HEK293 (cell line): ENCODE measurements at regions of chr17 and their contacts with region 1.

Region 1: GRCh38 chr17:40113110-40113906 is 8.5 kb upstream of the MSL1 start:
- H3K4me3 ChIP-seq: peak overlapping the region; percentile 38
- H3K27ac ChIP-seq: peak overlapping the region; percentile 79
- H3K4me1 ChIP-seq: peaks cover 31% of the 10 kb centered on the region
- CTCF ChIP-seq: peak; percentile 80; the same call in 1 of the 2 replicates

Region 2: GRCh38 chr17:39621523-39622379 is 491.6 kb before region 1 on chr17:
- CTCF ChIA-PET with region 1: no interaction called
- POLR2A ChIA-PET with region 1: no interaction called
- H3K4me3 ChIP-seq: no peak overlapping the region
- H3K27ac ChIP-seq: no peak overlapping the region
- H3K4me1 ChIP-seq: peaks cover 4% of the 10 kb centered on the region
- CTCF ChIP-seq: peak; percentile 99

Region 3: DNA sequence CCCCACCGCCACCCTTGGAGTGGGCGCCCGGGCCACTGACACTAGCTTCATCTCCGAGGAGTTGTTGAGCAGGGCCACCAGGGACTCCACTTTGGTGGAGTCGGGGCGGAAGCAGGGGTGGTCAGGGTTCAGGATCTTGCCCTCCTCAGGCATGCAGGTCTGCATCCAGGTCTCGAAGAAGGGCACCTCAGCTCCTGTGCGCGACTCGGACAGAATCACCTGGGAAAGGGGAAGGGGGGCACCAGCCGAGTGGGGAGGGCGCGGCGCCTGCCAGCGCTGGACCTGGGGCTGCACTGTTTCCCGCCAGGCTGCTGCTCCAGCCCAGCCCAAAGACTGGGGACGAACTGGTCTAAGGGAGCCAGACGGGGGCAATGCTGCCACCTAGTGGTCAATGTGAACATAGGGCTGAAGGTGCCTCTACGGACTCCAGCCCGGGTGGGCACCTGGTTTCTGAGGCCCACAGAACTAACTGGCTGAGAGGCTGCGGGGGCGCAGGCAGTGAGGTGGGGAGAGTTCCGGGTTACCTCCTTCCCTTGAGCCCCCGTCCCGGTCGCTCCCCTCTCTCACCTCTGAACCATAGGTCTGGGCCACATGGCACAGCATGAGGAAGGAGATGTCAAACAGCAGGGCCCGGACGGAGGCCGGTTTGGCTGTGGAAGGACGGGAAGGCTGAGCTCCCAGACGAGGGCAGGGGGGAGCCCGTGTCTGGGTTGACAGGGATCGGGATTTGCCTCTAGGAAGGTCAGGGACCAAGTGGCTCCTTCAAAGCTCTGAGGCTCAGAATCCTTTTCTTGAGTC is 86.3 kb before region 1 on chr17:
- CTCF ChIA-PET with region 1: interaction called, 135 read pairs
- POLR2A ChIA-PET with region 1: interaction called, 3 read pairs
- H3K4me3 ChIP-seq: no peak overlapping the region
- H3K27ac ChIP-seq: no peak overlapping the region
- H3K4me1 ChIP-seq: peaks cover 16% of the 10 kb centered on the region
- CTCF ChIP-seq: peak; percentile 82

Region 4: GRCh38 chr17:40075201-40075941 is 37.9 kb before region 1 on chr17:
- CTCF ChIA-PET with region 1: interaction called, 51 read pairs
- POLR2A ChIA-PET with region 1: interaction called, 5 read pairs
- H3K4me3 ChIP-seq: no peak overlapping the region
- H3K27ac ChIP-seq: no peak overlapping the region
- H3K4me1 ChIP-seq: peaks cover 22% of the 10 kb centered on the region
- CTCF ChIP-seq: peak; percentile 80

Region 5: GRCh38 chr17:40098846-40099618 is 14.3 kb before region 1 on chr17:
- CTCF ChIA-PET with region 1: interaction called, 55 read pairs
- POLR2A ChIA-PET with region 1: interaction called, 117 read pairs
- H3K4me3 ChIP-seq: peak overlapping the region; percentile 23
- H3K27ac ChIP-seq: peak overlapping the region; percentile 26; the same call in 1 of the 2 replicates
- H3K4me1 ChIP-seq: peaks cover 16% of the 10 kb centered on the region
- CTCF ChIP-seq: no peak

Region 6: GRCh38 chr17:40157973-40158372 is 44.7 kb after region 1 on chr17:
- CTCF ChIA-PET with region 1: interaction called, 15 read pairs
- POLR2A ChIA-PET with region 1: interaction called, 6 read pairs
- H3K4me3 ChIP-seq: no peak overlapping the region
- H3K27ac ChIP-seq: no peak overlapping the region
- H3K4me1 ChIP-seq: no peaks in the 10 kb centered on the region
- CTCF ChIP-seq: no peak

Region 7: GRCh38 chr17:40191237-40192208 is 78.2 kb after region 1 on chr17:
- CTCF ChIA-PET with region 1: interaction called, 52 read pairs
- POLR2A ChIA-PET with region 1: interaction called, 13 read pairs
- H3K4me3 ChIP-seq: peak overlapping the region; percentile 50
- H3K27ac ChIP-seq: no peak overlapping the region
- H3K4me1 ChIP-seq: peaks cover 6% of the 10 kb centered on the region
- CTCF ChIP-seq: peak; percentile 90

Region 8: GRCh38 chr17:40287494-40288369 is 174.4 kb after region 1 on chr17 and contains the start of gene CDC6:
- CTCF ChIA-PET with region 1: interaction called, 39 read pairs
- POLR2A ChIA-PET with region 1: interaction called, 3 read pairs
- H3K4me3 ChIP-seq: peak within 1 kb of the TSS; percentile 96
- H3K27ac ChIP-seq: peak within 1 kb of the TSS; percentile 95
- H3K4me1 ChIP-seq: peaks cover 3% of the 10 kb centered on the region
- CTCF ChIP-seq: 0 out of 2 replicates have a peak, but pooled peaks have one; percentile 9

Region 9: GRCh38 chr17:40382251-40382650 is 268.9 kb after region 1 on chr17:
- CTCF ChIA-PET with region 1: no interaction called
- POLR2A ChIA-PET with region 1: no interaction called
- H3K4me3 ChIP-seq: no peak overlapping the region
- H3K27ac ChIP-seq: no peak overlapping the region
- H3K4me1 ChIP-seq: no peaks in the 10 kb centered on the region
- CTCF ChIP-seq: no peak